MCF 10A (cell line): ENCODE measurements at regions of chr1 and their contacts with region 1.

Region 1: DNA sequence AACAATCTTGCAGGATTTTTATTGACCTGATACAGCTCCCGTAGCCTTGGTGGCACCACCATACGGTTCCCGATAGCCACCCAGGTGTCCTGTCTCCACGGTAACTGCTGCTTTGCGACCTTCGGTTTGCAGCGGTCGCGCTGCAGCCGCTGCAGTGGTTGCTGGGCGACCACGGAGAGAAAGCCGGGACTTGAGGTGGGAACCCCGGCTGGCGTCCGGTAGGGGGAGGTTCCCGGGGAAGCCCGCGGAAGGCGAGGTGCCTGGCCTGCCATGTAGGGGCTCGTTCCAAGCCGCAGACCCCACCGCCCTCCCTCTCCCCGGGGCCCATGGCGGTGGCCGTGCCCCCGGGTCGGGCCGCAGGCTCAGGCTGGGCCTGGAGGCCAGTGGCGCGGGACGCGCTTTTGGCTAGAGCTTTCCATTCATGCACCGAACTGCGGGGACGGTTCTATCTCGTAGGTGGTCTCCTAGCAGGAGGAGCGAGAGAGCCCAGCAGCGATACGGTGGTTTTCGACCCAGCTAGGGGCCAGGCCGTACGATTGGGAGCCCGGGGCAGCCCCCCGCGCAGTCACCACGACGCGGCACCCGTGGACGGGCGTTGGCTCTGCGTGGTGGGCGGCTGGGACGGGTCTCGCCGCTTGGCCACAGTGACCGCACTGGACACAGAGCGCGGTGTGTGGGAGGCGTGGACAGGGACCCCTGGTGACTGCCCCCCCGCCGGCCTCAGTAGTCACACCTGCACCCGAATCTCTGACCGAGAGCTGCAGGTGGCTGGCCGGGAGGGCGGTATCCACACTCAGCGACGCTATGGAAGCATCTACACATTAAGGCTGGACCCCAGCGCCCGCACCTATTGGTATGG is at the start of gene KLHDC9:
- DNase-seq: no peak
- H3K4me3 Mint-ChIP-seq: no peak within 1 kb of the TSS
- H3K27ac Mint-ChIP-seq: peak within 1 kb of the TSS; percentile 61
- H3K4me1 Mint-ChIP-seq: peaks cover 37% of the 10 kb centered on the region
- H3K27me3 Mint-ChIP-seq: no peaks in the 10 kb centered on the region
- CTCF ChIP-seq: no peak
- total RNA-seq, gene KLHDC9: not detected in 2 replicates

Region 2: DNA sequence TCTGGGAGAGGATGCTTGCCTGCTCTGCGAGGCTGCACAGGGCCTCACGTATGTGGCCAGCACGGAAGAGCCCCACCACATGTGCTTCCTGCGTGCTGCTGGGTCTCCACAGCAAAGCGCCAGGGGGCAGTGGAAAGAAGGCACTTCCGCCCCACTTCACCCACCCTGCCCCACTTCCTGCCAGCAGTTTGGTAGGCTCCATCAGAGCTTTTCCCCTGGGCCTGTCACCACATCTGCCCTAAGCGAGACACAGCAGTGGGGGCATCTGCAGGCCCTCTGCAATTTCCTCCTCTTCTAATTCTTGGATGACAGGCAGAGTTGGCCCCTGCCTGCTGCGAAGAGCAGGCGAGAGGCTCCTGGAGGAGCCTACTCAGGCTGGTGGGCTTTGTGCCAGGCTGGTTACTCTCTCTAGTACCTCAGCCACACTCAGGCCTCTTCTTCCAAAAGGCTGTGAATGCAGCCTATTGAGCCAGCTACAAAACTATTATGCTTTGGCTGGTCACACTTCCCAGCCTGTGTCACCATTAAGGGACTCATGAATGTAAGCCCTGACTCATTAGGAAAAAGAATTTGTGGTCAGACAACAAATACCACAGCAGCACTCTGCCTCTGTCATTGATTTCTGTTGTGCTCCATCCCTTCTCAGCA is 260.8 kb before region 1 on chr1:
- CTCF ChIA-PET with region 1: interaction called, 27 read pairs
- POLR2A ChIA-PET with region 1: interaction called, 6 read pairs
- intact Hi-C with region 1: loop called (anchors 5 kb)
- DNase-seq: no peak
- H3K4me3 Mint-ChIP-seq: no peak overlapping the region
- H3K27ac Mint-ChIP-seq: no peak overlapping the region
- H3K4me1 Mint-ChIP-seq: no peaks in the 10 kb centered on the region
- H3K27me3 Mint-ChIP-seq: no peaks in the 10 kb centered on the region
- CTCF ChIP-seq: no peak

Region 3: DNA sequence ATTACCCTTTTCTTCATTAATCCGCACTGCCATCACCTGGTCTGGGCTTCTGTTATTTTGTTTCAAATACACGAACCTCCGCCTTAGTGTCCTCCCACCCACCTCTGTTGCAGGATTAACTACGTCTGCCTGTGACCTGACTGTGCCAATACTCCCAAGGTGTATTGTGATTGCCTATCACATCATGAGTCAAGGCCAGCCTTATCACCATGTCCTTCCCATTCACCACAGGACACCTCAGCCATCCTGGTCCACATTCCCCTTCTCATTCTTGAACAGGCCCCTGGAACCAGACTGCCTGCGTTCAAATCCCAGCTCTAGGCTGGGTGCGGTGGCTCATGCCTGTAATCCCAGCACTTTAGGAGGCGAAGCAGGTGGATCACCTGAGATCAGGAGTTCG is 91.9 kb before region 1 on chr1:
- CTCF ChIA-PET with region 1: interaction called, 19 read pairs
- POLR2A ChIA-PET with region 1: interaction called, 3 read pairs
- intact Hi-C with region 1: no loop called
- DNase-seq: no peak
- H3K4me3 Mint-ChIP-seq: no peak overlapping the region
- H3K27ac Mint-ChIP-seq: no peak overlapping the region
- H3K4me1 Mint-ChIP-seq: peaks cover 18% of the 10 kb centered on the region
- H3K27me3 Mint-ChIP-seq: no peaks in the 10 kb centered on the region
- CTCF ChIP-seq: no peak

Region 4: DNA sequence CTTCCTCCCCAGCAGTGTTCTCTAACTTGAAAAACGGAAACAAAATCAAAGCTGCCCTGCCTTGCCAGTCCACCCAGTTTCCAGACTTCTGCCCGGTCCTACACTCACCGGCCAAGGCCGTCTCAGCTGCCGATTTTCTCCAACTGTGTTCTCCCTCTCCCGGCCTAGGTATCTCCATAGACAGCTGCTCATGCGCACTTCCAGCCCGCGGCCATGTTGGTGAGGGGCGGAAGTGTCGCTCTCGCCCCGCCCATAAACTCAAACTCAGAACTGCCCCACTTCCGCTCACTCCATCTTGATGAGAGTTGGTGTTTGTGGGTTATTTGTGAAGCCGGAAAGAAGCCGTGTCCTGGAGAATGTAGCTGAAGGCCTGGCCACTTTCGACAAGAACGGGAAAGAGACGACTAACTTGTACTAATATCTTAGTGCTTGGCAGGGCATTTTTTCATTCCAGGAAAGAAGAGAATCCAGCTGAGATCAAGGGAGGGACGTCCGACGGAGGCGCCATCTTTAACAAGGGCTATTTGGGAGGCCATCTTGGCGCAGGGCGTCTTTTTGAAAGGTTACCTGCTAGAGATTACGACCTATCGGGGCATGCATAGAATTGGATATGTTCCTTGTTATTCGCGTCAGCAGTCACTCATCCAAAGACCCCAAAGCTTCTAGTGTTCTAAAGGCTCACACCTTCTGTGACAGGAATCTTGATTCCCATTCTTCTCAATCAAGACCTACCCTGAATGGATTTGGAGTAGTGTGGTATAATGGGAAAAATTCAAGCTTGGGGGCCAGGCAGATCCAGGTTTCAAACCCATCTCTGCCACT is 52.5 kb before region 1 on chr1 and contains the start of gene USF1:
- CTCF ChIA-PET with region 1: interaction called, 89 read pairs
- POLR2A ChIA-PET with region 1: interaction called, 91 read pairs
- intact Hi-C with region 1: loop called (anchors 1 kb)
- DNase-seq: peak; percentile 99
- H3K4me3 Mint-ChIP-seq: peak within 1 kb of the TSS; percentile 93
- H3K27ac Mint-ChIP-seq: peak within 1 kb of the TSS; percentile 99
- H3K4me1 Mint-ChIP-seq: peaks cover 18% of the 10 kb centered on the region
- H3K27me3 Mint-ChIP-seq: no peaks in the 10 kb centered on the region
- CTCF ChIP-seq: no peak
- total RNA-seq, gene USF1: 48.8 and 52.8 TPM in 2 replicates

Region 5: DNA sequence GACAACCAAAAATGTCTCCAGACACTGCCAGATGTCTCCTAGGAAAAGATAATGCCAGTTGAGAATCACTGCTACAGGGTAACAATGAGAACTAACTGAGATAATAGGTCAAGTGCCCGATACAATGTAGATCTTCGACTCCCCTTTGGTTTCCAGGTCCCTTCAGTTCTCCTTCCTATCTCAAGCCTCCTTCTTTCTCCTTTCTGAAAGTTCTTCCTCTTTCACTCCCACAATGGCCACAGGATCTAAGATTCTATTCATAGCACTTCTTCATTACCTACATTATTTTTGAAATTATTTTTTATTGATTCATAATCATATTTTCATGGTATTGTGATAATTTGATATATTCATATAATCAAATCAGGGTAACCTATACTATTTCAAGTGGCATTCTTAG is 13.1 kb after region 1 on chr1:
- CTCF ChIA-PET with region 1: interaction called, 46 read pairs
- POLR2A ChIA-PET with region 1: interaction called, 10 read pairs
- intact Hi-C with region 1: no loop called
- DNase-seq: no peak
- H3K4me3 Mint-ChIP-seq: no peak overlapping the region
- H3K27ac Mint-ChIP-seq: peak overlapping the region; percentile 21
- H3K4me1 Mint-ChIP-seq: peaks cover 44% of the 10 kb centered on the region
- H3K27me3 Mint-ChIP-seq: no peaks in the 10 kb centered on the region
- CTCF ChIP-seq: no peak

Region 6: DNA sequence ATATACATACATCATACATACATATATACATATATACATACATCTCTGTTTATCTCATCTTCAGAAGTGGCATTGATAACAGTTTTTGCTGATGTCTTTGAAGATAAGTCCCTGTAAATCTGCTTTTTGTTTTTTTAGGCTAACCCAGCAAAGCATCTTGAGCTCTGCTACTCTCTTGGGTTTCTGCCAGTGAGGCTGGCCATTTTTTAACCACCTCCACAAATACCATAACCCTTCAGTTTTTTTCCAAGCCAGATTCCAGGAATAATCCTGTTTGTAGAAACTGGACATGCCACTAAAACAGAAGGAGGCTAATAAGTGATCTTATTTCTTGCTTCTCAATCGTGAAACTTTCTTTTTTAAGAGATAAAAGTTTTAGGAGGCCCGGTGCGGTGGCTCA is 237.4 kb after region 1 on chr1:
- CTCF ChIA-PET with region 1: no interaction called
- POLR2A ChIA-PET with region 1: no interaction called
- intact Hi-C with region 1: no loop called
- DNase-seq: no peak
- H3K4me3 Mint-ChIP-seq: no peak overlapping the region
- H3K27ac Mint-ChIP-seq: no peak overlapping the region
- H3K4me1 Mint-ChIP-seq: no peaks in the 10 kb centered on the region
- H3K27me3 Mint-ChIP-seq: no peaks in the 10 kb centered on the region
- CTCF ChIP-seq: no peak

Region 7: GRCh38 chr1:161890574-161890973 is 792.1 kb after region 1 on chr1:
- CTCF ChIA-PET with region 1: no interaction called
- POLR2A ChIA-PET with region 1: no interaction called
- intact Hi-C with region 1: no loop called
- DNase-seq: no peak
- H3K4me3 Mint-ChIP-seq: no peak overlapping the region
- H3K27ac Mint-ChIP-seq: no peak overlapping the region
- H3K4me1 Mint-ChIP-seq: peaks cover 5% of the 10 kb centered on the region
- H3K27me3 Mint-ChIP-seq: no peaks in the 10 kb centered on the region
- CTCF ChIP-seq: no peak